Gastrocnemius medialis (tissue), 4 donors: ENCODE measurements at regions of chr1 and their contacts with region 1.

Region 1: DNA sequence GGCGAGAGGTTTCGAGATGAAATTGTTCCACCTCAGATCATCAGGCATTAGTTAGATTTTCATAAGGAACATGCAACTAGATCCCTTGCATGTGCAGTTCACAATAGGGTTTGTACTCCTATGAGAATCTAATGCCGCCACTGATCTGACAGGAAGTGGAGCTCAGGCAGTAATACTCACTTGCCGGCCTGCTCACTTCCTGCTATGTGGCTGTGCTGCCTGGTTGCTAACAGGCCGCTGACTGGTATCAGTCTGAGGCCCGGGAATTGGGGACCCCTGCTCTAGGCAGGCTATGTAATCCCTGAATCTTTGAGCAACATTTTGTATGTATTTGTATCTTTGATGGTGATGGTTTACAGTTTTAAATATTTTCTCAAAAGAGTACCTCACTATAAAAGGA is 32.5 kb downstream of the XKR8 start:
- DNase-seq: no peak
- ATAC-seq: no peak
- H3K4me3 ChIP-seq: no peak overlapping the region
- H3K27ac ChIP-seq: no peak overlapping the region
- H3K4me1 ChIP-seq: no peaks in the 10 kb centered on the region
- H3K27me3 ChIP-seq: no peaks in the 10 kb centered on the region
- CTCF ChIP-seq: no peak
- POLR2A ChIP-seq: no peak

Region 2: GRCh38 chr1:27915082-27915598 is 77.1 kb before region 1 on chr1:
- in situ Hi-C with region 1: no loop called
- intact Hi-C with region 1: no loop called
- DNase-seq: no peak
- ATAC-seq: no peak
- H3K4me3 ChIP-seq: peak overlapping the region; percentile 71 to 99 (median 76)
- H3K27ac ChIP-seq: peak overlapping the region; percentile 76 to 95 (median 86)
- H3K4me1 ChIP-seq: peaks cover 0 to 6% of the 10 kb centered on the region in 2 donors
- H3K27me3 ChIP-seq: no peaks in the 10 kb centered on the region
- CTCF ChIP-seq: no peak
- POLR2A ChIP-seq: no peak

Region 3: DNA sequence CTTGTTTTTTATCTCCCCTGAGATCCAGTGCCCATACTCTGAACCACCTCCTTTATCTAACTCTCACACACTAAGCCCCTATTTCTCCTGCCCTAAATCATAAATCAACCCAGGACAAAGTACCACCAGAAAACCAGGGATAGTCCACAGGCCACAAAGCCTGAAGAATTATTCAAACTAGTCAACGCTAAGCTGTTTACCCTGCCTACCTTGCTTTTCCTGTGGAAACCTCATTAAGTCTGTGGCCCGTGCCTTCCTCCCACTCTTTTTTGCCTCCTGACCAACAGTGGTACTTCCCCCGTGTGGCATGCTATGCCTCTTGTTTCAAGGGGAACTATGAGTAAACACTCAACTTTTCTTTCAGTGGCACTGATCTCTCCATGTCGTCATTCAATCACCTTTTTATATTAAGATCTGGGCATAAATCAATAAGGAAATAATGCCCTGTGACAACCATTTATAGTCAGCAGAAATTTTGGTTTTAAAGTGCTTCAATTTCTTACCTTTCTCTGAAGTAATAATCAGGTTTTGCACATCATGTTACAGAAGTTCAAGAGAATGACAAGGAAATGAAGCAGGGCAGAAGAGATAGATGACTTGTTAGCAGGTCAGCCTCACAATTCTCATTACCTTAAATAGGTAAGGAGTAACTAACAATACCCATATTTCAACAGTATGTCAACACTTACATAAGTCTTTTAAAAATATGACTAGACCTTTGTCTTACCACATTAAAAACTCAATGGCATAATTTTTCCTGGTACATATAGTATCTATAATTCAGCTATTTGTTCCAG is 64.1 kb after region 1 on chr1:
- in situ Hi-C with region 1: no loop called
- intact Hi-C with region 1: loop called (anchors 10 kb)
- DNase-seq: no peak
- ATAC-seq: no peak
- H3K4me3 ChIP-seq: no peak overlapping the region
- H3K27ac ChIP-seq: no peak overlapping the region
- H3K4me1 ChIP-seq: peaks cover 5 to 23% of the 10 kb centered on the region in 2 donors
- H3K27me3 ChIP-seq: no peaks in the 10 kb centered on the region
- CTCF ChIP-seq: no peak
- POLR2A ChIP-seq: no peak